Psoas muscle (tissue), 8 donors: ENCODE measurements at regions of chr1 and their contacts with region 1.

Region 1: GRCh38 chr1:204565617-204566582 is 49.7 kb downstream of the MDM4 start:
- DNase-seq: no peak
- ATAC-seq: peak; percentile 56 to 82 (median 68)
- H3K4me3 ChIP-seq: no peak overlapping the region
- H3K27ac ChIP-seq: no peak overlapping the region
- H3K4me1 ChIP-seq: no peaks in the 10 kb centered on the region
- H3K27me3 ChIP-seq: no peaks in the 10 kb centered on the region
- CTCF ChIP-seq: peak; percentile 46

Region 2: DNA sequence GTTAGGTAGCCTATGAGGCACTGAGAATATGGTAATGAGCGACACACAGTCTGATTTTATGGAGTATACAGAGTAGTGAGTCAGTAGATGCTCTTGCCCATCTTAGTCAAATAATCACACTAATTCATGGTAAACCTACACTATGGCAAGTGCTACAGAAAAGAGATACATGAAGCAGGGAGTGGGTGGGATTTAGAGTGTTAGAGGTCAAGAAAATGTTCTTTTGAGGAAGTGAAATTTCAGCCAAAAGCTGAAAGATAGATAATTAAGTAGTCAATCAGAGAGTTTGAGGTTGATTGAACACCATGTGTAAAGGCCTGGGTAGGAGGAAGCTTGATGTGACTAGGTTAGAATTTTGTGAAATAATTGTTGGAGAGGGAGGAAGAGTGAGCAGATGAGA is 35.0 kb before region 1 on chr1:
- intact Hi-C with region 1: no loop called
- DNase-seq: no peak
- ATAC-seq: no peak
- H3K4me3 ChIP-seq: no peak overlapping the region
- H3K27ac ChIP-seq: no peak overlapping the region
- H3K4me1 ChIP-seq: peaks cover 9% of the 10 kb centered on the region
- H3K27me3 ChIP-seq: no peaks in the 10 kb centered on the region
- CTCF ChIP-seq: no peak

Region 3: DNA sequence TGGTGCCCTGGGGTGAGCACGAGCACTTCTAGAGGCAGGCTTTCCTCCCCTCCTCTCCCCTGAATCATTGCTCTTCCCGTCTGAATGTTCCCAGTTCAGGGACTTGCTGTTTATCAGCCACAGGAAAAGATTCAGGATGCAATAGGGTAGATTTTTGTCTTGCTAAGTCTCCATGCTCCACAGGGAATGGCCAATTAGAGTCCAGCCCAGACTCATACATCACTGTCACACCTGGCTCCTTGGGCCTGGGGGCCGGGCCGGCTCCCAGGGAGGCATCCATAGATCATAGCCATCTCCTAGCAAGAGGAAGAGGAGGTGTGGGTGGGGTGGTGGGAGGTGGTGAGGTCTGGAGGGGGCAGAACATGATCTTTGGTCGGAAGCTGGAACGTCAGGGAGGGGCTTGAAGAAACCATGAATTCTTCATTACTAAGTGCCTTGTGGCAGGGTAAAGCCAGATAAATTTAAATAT is 36.2 kb after region 1 on chr1:
- intact Hi-C with region 1: no loop called
- DNase-seq: no peak
- ATAC-seq: no peak
- H3K4me3 ChIP-seq: no peak overlapping the region
- H3K27ac ChIP-seq: no peak overlapping the region
- H3K4me1 ChIP-seq: no peaks in the 10 kb centered on the region
- H3K27me3 ChIP-seq: peaks cover 0 to 3% (median 0%) of the 10 kb centered on the region in 3 donors
- CTCF ChIP-seq: no peak

Region 4: GRCh38 chr1:204763706-204764427 is 198.0 kb after region 1 on chr1:
- intact Hi-C with region 1: loop called (anchors 5 to 10 kb)
- DNase-seq: peak; percentile 68 to 76
- ATAC-seq: peak; percentile 70 to 93 (median 84)
- H3K4me3 ChIP-seq: no peak overlapping the region
- H3K27ac ChIP-seq: no peak overlapping the region
- H3K4me1 ChIP-seq: no peaks in the 10 kb centered on the region
- H3K27me3 ChIP-seq: peaks cover 0 to 41% (median 3%) of the 10 kb centered on the region in 3 donors
- CTCF ChIP-seq: peak; percentile 61

Region 5: DNA sequence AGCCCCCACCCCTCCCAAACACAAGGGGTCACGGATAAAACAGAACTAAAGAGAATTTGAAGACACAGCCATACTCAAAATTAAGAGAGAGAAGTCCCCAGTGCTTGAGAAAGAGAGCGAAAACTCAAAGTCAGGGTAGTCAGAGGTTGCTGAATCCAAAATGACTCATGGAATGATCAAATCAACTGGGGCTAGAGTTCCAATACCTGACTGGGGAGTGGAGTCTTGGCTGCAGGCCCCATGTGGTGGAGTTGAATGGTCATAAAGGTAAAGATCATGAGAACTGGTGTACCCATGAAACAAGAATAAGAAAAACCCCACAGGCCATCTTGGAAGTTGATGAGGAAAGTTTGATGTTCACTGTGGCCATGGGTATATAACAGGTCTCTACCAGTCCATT is 204.1 kb after region 1 on chr1:
- intact Hi-C with region 1: loop called (anchors 5 to 10 kb)
- DNase-seq: no peak
- ATAC-seq: no peak
- H3K4me3 ChIP-seq: no peak overlapping the region
- H3K27ac ChIP-seq: no peak overlapping the region
- H3K4me1 ChIP-seq: no peaks in the 10 kb centered on the region
- H3K27me3 ChIP-seq: peaks cover 3 to 62% (median 3%) of the 10 kb centered on the region in 3 donors
- CTCF ChIP-seq: no peak

Region 6: GRCh38 chr1:204806943-204807687 is 241.2 kb after region 1 on chr1:
- intact Hi-C with region 1: loop called (anchors 1 to 5 kb)
- DNase-seq: peak; percentile 82 to 86
- ATAC-seq: peak; percentile 92 to 98 (median 94)
- H3K4me3 ChIP-seq: peak overlapping the region; percentile 60
- H3K27ac ChIP-seq: no peak overlapping the region
- H3K4me1 ChIP-seq: no peaks in the 10 kb centered on the region
- H3K27me3 ChIP-seq: no peaks in the 10 kb centered on the region
- CTCF ChIP-seq: peak; percentile 84